Aorta (tissue), 5 donors: ENCODE measurements at regions of chr6 and their contacts with region 1.

Region 1: GRCh38 chr6:36615018-36615761 is 21.0 kb downstream of the SRSF3 start:
- DNase-seq: peak in 1 of 2 donors; percentile 61
- ATAC-seq: peak; percentile 77
- H3K4me3 ChIP-seq: no peak overlapping the region
- H3K27ac ChIP-seq: no peak overlapping the region
- H3K4me1 ChIP-seq: peaks cover 0 to 1% of the 10 kb centered on the region in 2 donors
- H3K27me3 ChIP-seq: no peaks in the 10 kb centered on the region

Region 2: DNA sequence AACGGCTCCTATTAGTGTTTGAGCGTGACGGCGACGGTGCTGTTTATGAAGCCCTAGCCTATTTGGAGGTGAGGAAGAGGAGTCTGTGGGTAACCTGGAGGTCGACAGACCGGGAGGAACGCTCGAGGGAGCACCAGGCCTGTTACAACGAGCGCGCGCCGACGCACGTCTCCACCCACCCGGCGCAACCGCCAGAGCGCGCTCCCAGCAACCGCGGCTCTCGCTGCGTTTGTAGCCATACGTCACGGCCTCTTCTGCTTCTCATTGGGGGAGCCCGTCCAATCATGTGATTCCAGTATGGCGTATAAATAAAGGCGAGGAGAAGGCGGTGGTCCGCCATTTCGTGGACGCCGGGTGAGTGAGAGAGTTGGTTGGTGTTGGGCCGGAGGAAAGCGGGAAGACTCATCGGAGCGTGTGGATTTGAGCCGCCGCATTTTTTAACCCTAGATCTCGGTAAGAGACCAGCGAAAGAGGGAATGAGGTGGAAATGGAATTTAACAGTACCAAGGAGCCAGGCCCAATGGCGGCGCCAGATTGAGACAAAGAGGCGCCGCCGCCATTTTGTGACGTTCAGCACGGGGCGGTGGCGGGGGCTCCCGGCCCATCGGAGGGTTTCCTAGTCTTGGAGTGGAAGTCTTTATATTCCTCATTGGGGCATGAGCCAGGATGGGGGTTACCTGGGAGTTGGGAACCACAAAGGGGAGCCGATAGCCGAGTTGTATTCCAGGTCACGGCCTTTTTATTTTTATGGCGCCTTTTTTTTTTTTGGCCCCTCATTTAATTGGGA is 21.0 kb before region 1 on chr6 and contains the start of gene SRSF3:
- intact Hi-C with region 1: no loop called
- DNase-seq: peak; percentile 98 to 99
- ATAC-seq: peak; percentile 99
- H3K4me3 ChIP-seq: peak within 1 kb of the TSS; percentile 88 to 98
- H3K27ac ChIP-seq: peak within 1 kb of the TSS; percentile 73 to 93
- H3K4me1 ChIP-seq: peaks cover 4 to 9% of the 10 kb centered on the region in 2 donors
- H3K27me3 ChIP-seq: no peaks in the 10 kb centered on the region
- total RNA-seq, gene SRSF3: 190 to 197 TPM

Region 3: DNA sequence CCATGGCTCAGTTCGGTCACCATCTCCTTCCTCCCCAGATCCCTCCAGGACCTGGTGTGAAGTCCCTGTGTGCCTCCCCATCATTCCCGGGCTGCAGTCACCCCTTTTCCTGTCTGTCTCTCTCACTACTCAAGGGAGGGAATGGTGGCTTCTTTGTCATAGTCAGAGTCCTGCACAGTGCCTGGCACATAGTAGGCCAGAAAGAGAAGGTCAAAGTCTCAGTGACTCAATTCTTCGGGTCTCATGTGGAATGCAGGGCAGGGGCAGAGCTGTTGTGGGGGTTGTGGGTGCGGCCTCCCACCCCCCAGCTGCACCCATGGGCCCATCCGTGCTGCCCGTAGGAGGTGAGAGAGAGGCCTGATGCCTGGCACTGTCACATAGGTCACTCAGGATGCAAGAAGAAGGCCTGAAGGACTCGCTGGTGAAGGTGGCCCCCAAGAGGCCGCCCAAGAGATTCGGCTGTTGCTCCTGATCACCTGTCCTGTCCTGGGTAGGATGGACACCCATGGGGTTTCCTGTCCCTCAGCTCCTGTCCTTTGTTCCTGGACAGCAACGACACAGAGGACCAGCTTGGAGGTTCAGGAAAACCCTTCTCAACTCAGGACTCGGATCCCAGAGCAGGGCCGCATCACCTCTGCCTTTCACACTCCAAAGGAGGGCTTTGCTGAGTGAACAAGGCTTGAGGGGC is 116.6 kb after region 1 on chr6:
- intact Hi-C with region 1: loop called in 1 of 2 experiments (anchors 5 kb)
- DNase-seq: peak in 1 of 2 donors; percentile 57
- ATAC-seq: no peak
- H3K4me3 ChIP-seq: no peak overlapping the region
- H3K27ac ChIP-seq: no peak overlapping the region
- H3K4me1 ChIP-seq: no peaks in the 10 kb centered on the region
- H3K27me3 ChIP-seq: no peaks in the 10 kb centered on the region